A673 (cell line): ENCODE measurements at regions of chr15 and their contacts with region 1.

Region 1: GRCh38 chr15:49620658-49621368 is at the starts of genes DTWD1 and FAM227B:
- DNase-seq: peak; percentile 99
- H3K4me3 ChIP-seq: peak within 1 kb of the TSS; percentile 67
- H3K27ac ChIP-seq: peak within 1 kb of the TSS; percentile 90
- H3K4me1 ChIP-seq: peaks cover 8% of the 10 kb centered on the region
- H3K27me3 ChIP-seq: no peaks in the 10 kb centered on the region
- CTCF ChIP-seq: no peak
- total RNA-seq, gene DTWD1: 16.5 and 18.0 TPM in 2 replicates
- total RNA-seq, gene FAM227B: 2.3 and 4.2 TPM in 2 replicates

Region 2: GRCh38 chr15:49235446-49236124 is 385.2 kb before region 1 on chr15:
- CTCF ChIA-PET with region 1: no interaction called
- POLR2A ChIA-PET with region 1: no interaction called
- intact Hi-C with region 1: no loop called
- DNase-seq: peak; percentile 84
- H3K4me3 ChIP-seq: no peak overlapping the region
- H3K27ac ChIP-seq: no peak overlapping the region
- H3K4me1 ChIP-seq: peaks cover 33% of the 10 kb centered on the region
- H3K27me3 ChIP-seq: no peaks in the 10 kb centered on the region
- CTCF ChIP-seq: peak; percentile 83

Region 3: DNA sequence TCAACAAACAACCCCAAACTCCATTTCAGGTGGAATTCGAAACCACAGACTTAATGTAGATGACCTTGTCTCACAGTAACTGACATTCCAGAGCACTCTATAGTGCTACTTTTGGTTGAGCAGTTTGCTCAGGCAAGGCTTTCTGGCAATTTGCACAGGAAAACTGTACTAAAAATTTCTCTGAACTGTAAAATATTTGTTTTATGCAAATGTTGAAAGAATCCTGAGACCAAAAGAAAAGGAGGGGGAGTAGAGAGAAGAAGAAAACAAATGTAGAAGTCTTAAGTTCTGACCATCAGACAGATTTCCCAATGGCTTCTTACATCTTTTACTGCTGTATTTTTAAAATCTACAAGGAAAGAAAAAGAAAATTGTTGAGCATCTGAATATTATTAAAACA is 53.6 kb after region 1 on chr15:
- CTCF ChIA-PET with region 1: no interaction called
- POLR2A ChIA-PET with region 1: no interaction called
- intact Hi-C with region 1: no loop called
- DNase-seq: no peak
- H3K4me3 ChIP-seq: no peak overlapping the region
- H3K27ac ChIP-seq: no peak overlapping the region
- H3K4me1 ChIP-seq: no peaks in the 10 kb centered on the region
- H3K27me3 ChIP-seq: no peaks in the 10 kb centered on the region
- CTCF ChIP-seq: no peak

Region 4: DNA sequence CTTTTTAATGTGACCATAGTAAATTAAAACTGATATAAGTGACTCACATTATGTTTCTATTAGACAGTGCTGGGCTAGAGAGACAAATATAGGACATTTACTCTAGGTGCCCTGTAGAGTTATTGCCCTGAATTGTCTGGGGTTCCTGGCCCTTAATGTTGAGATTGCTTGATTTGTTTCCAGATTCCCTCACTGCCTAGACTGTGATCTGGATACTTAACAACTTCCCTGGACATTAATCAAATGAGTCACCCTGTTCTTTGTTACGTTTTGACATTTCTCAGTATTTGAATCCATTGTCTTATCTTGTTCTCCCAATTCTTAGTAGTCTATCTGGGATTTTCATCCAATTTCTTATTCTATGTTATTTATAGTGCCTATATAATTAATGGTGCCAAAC is 65.8 kb after region 1 on chr15:
- CTCF ChIA-PET with region 1: no interaction called
- POLR2A ChIA-PET with region 1: no interaction called
- intact Hi-C with region 1: loop called (anchors 10 kb)
- DNase-seq: no peak
- H3K4me3 ChIP-seq: no peak overlapping the region
- H3K27ac ChIP-seq: no peak overlapping the region
- H3K4me1 ChIP-seq: no peaks in the 10 kb centered on the region
- H3K27me3 ChIP-seq: no peaks in the 10 kb centered on the region
- CTCF ChIP-seq: no peak